ENCODE measurements at regions of chrX and their contacts with region 1.

Region 1: GRCh38 chrX:150715184-150715583 is 22.0 kb downstream of the MTMR1 start:
- DNase-seq: no peak
- H3K4me3 ChIP-seq: no peak overlapping the region
- H3K4me3 Mint-ChIP-seq: no peak overlapping the region
- H3K27ac Mint-ChIP-seq: no peak overlapping the region
- H3K4me1 ChIP-seq: no peaks in the 10 kb centered on the region
- H3K4me1 Mint-ChIP-seq: no peaks in the 10 kb centered on the region
- H3K27me3 ChIP-seq: no peaks in the 10 kb centered on the region
- H3K27me3 Mint-ChIP-seq: no peaks in the 10 kb centered on the region
- CTCF ChIP-seq: no peak

Region 2: GRCh38 chrX:150683536-150684146 is 31.5 kb before region 1 on chrX:
- CTCF ChIA-PET with region 1: interaction called, 5 read pairs
- POLR2A ChIA-PET with region 1: no interaction called
- intact Hi-C with region 1: loop called (anchors 1 kb)
- DNase-seq: peak in 1 of 2 experiments; percentile 29
- H3K4me3 ChIP-seq: no peak overlapping the region
- H3K4me3 Mint-ChIP-seq: no peak overlapping the region
- H3K27ac Mint-ChIP-seq: no peak overlapping the region
- H3K4me1 ChIP-seq: peaks cover 4% of the 10 kb centered on the region; the same call in 1 of the 2 replicates
- H3K4me1 Mint-ChIP-seq: no peaks in the 10 kb centered on the region
- H3K27me3 ChIP-seq: no peaks in the 10 kb centered on the region
- H3K27me3 Mint-ChIP-seq: no peaks in the 10 kb centered on the region
- CTCF ChIP-seq: peak in 1 of 2 experiments; percentile 50

Measured in Caco-2 (cell line).